Mammary epithelial cell (primary cell): ENCODE measurements at regions of chr10 and their contacts with region 1.

Region 1: DNA sequence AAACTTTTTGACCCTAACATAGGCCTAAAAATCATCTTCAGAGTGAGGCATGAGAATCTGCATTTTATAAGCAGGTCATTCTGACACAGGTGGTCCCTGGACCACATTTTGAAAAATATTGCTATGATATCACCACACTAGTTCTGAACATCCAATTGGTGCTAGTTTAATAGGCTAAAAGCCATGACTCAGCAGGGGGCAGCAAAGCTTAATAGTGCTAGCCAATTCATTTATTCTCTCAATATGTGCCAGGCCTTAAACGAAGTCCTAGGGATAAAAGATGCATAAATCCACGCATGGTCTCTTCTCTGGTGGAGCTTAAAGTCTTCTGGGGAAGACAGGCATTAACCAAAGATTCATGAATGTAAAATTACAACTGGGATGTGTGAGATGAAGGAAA is 10.2 kb upstream of the SLC25A28 start:
- DNase-seq: peak; percentile 63
- H3K4me3 ChIP-seq: no peak overlapping the region
- H3K27ac ChIP-seq: no peak overlapping the region
- H3K4me1 ChIP-seq: peaks cover 27% of the 10 kb centered on the region
- H3K27me3 ChIP-seq: no peaks in the 10 kb centered on the region
- CTCF ChIP-seq: peak; percentile 45 to 71

Region 2: DNA sequence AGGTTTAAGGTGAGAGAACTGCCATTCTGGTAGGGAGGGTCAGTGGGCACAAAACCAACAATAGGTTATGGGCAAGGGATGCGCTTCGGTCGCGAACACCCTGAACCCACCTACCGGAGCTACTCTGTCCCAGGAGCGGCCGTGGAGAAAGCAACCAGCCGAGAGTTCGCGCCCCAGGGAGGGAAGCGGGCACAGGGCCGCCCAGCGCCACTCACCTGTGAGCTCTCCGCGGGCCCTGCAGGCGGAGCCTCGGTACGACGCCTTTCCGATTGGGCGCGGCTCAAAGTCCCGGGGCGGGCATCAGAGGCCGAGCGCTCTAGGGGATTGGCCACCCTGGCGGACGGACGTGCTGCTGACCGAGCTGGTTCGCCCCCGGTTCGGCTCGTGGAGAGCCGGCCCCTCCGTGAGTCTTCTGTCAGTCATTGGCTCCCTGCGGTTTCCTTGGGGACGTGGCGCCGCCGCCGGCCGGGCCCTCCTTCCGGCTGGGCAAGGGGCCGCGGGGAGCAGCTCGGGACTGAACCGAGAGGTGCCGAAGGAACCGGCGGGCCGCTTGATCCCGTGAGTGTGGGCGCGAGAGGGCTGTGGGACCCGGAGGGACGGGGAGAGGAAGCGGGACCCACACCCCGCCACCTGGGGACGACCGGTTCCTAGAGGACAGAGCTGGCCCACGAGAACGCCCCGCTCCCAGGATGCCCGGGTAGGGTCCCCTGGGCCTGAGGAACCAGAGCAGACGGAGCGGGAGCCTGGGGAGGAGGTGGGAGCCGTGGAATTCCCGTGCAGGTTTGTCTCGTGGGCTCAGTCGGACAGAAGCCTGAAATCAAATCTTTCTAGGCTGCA is 28.8 kb after region 1 on chr10 and contains the start of gene ENTPD7:
- CTCF ChIA-PET with region 1: no interaction called
- dilution Hi-C with region 1: no loop called
- in situ Hi-C with region 1: no loop called
- intact Hi-C with region 1: loop called (anchors 1 kb)
- DNase-seq: peak; percentile 98
- H3K4me3 ChIP-seq: peak within 1 kb of the TSS; percentile 84 to 97 (median 94)
- H3K27ac ChIP-seq: peak within 1 kb of the TSS; percentile 95
- H3K4me1 ChIP-seq: peaks cover 64% of the 10 kb centered on the region
- H3K27me3 ChIP-seq: no peaks in the 10 kb centered on the region
- CTCF ChIP-seq: peak in 1 of 2 donors; percentile 27
- total RNA-seq, gene ENTPD7: 23.2 to 47.2 TPM

Region 3: DNA sequence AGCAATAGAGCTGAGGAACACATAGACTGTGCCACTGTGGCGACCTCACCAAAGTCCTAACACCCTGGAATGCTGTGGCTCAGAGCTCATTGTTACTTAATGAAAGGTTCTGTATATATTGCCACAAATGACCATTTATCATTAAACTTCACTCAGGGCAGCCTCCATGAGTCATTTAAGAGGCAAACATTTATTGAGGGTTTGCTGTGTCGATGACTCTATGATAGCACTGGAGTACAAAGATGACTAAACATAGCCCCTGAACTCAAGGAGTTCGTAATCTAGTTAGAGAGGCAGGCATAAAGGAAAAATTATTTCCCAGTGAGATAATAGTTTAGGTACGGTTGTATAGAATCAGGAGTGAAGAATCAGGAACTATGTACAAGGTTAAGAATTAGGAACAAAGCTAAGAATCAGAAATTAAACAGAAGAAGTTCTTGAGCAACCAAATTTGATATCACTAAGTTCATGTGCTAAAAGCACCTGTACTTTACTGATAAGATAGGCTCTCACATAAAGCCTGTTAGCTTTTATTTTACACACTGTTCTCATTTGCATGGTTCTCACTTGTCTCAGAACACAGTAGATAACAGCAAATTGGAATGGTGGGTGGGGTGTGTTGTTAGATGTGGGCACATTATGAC is 36.8 kb after region 1 on chr10:
- CTCF ChIA-PET with region 1: no interaction called
- dilution Hi-C with region 1: loop called (anchors 5 kb)
- in situ Hi-C with region 1: no loop called
- intact Hi-C with region 1: no loop called
- DNase-seq: peak; percentile 91
- H3K4me3 ChIP-seq: no peak overlapping the region
- H3K27ac ChIP-seq: peak overlapping the region; percentile 37
- H3K4me1 ChIP-seq: peaks cover 35% of the 10 kb centered on the region
- H3K27me3 ChIP-seq: no peaks in the 10 kb centered on the region
- CTCF ChIP-seq: no peak

Region 4: DNA sequence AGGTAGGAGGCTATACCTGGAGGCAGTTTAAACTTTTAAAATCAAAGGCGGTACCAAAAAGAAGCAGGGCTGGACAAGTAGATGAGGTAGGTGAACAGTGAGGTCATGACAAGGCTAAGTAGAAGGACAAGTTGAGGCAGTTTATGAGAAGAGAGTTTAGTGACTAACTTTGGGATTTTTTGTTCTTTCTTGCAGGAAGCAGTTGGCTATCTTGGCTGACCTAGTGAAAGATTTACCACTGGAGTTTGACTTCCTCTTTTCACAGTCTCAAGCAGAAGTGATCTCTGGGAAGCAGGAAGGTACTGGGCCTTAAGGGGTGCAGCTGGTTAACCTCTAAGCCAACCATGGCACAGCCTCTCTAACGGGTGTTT is 55.1 kb after region 1 on chr10:
- CTCF ChIA-PET with region 1: interaction called, 3 read pairs
- dilution Hi-C with region 1: no loop called
- in situ Hi-C with region 1: no loop called
- intact Hi-C with region 1: loop called (anchors 1 kb)
- DNase-seq: peak; percentile 96
- H3K4me3 ChIP-seq: no peak overlapping the region
- H3K27ac ChIP-seq: peak overlapping the region; percentile 64
- H3K4me1 ChIP-seq: peaks cover 69% of the 10 kb centered on the region
- H3K27me3 ChIP-seq: no peaks in the 10 kb centered on the region
- CTCF ChIP-seq: no peak

Region 5: DNA sequence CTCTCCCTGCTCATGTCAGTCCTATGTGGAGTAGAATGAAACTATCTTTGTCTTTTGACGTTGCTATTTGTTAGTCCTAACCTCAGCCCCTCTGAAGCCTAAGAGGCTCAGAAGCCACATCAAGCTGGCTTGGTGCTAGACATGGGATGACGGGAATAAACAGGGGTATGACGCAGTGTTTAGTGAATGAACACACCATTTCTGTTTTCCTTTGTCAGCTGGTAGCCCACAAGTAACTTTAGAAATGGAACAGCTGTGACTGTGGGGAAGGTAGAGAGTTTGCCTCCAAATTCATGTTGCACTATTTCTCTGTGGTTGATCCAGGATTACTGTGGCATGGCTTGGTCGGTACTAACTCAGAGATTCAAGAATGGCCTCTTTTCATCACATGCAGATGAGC is 70.2 kb after region 1 on chr10:
- CTCF ChIA-PET with region 1: no interaction called
- dilution Hi-C with region 1: loop called (anchors 5 kb)
- in situ Hi-C with region 1: no loop called
- intact Hi-C with region 1: no loop called
- DNase-seq: no peak
- H3K4me3 ChIP-seq: no peak overlapping the region
- H3K27ac ChIP-seq: no peak overlapping the region
- H3K4me1 ChIP-seq: no peaks in the 10 kb centered on the region
- H3K27me3 ChIP-seq: no peaks in the 10 kb centered on the region
- CTCF ChIP-seq: no peak

Region 6: GRCh38 chr10:99758211-99758891 is 127.9 kb after region 1 on chr10:
- CTCF ChIA-PET with region 1: no interaction called
- dilution Hi-C with region 1: no loop called
- in situ Hi-C with region 1: no loop called
- intact Hi-C with region 1: no loop called
- DNase-seq: no peak
- H3K4me3 ChIP-seq: no peak overlapping the region
- H3K27ac ChIP-seq: no peak overlapping the region
- H3K4me1 ChIP-seq: peaks cover 9% of the 10 kb centered on the region
- H3K27me3 ChIP-seq: no peaks in the 10 kb centered on the region
- CTCF ChIP-seq: no peak

Region 7: GRCh38 chr10:100307701-100308100 is 677.3 kb after region 1 on chr10:
- CTCF ChIA-PET with region 1: no interaction called
- dilution Hi-C with region 1: no loop called
- in situ Hi-C with region 1: no loop called
- intact Hi-C with region 1: no loop called
- DNase-seq: no peak
- H3K4me3 ChIP-seq: no peak overlapping the region
- H3K27ac ChIP-seq: no peak overlapping the region
- H3K4me1 ChIP-seq: peaks cover 6% of the 10 kb centered on the region
- H3K27me3 ChIP-seq: no peaks in the 10 kb centered on the region
- CTCF ChIP-seq: no peak